Dorsolateral prefrontal cortex (tissue), 120 donors: ENCODE measurements at regions of chr2 and their contacts with region 1.

Region 1: GRCh38 chr2:15919716-15920434 is 20.5 kb upstream of the MYCN start:
- DNase-seq: no peak
- H3K4me3 ChIP-seq: no peak overlapping the region
- H3K27ac ChIP-seq: no peak overlapping the region
- H3K27me3 ChIP-seq: peaks cover 0 to 6% (median 0%) of the 10 kb centered on the region in 45 donors
- CTCF ChIP-seq: no peak

Region 2: GRCh38 chr2:15649556-15650255 is 270.2 kb before region 1 on chr2:
- intact Hi-C with region 1: loop called in 1 of 2 experiments (anchors 5 kb)
- DNase-seq: no peak
- H3K4me3 ChIP-seq: no peak overlapping the region
- H3K27ac ChIP-seq: no peak overlapping the region
- H3K27me3 ChIP-seq: no peaks in the 10 kb centered on the region
- CTCF ChIP-seq: no peak